ENCODE measurements at regions of chr5 and their contacts with region 1.

Region 1: DNA sequence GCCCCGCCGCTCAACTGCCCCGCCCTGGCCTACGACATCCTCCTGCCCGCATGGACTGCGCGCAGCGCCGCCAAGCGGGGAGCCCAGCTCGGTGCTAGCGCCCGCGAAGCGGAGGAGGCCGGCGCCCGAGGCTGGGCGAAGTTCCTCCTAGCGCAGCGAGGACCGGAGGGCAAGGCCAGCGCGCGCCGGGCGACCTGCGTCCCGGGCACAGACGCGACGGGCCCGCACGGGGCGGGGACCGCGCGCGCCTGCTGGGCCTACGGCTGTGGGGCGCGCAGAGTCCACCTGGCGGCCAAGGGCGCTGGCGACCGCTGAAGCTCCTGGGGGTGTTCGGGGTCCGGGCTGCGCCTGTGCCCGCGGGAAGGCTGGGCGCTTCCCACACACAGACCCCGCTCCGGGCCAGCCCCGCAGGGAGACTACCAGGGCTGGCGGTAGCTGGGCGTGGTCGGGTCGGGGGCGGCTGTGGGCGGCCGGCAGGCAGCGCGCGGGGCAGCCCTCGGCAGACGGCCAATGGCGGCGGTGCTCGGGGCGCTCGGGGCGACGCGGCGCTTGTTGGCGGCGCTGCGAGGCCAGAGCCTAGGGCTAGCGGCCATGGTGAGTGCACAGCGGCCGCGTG is at the start of gene PCBD2:
- DNase-seq: peak; percentile 96 to 97
- ATAC-seq: peak; percentile 97
- H3K4me3 ChIP-seq: peak within 1 kb of the TSS; percentile 85 to 87
- H3K27ac ChIP-seq: peak within 1 kb of the TSS; percentile 91 to 95
- H3K4me1 ChIP-seq: no peaks in the 10 kb centered on the region
- H3K27me3 ChIP-seq: no peaks in the 10 kb centered on the region
- total RNA-seq, gene PCBD2: 7.5 to 9.2 TPM

Region 2: GRCh38 chr5:134738133-134738962 is 166.4 kb before region 1 on chr5 and contains the start of gene CAMLG:
- intact Hi-C with region 1: loop called in 1 of 2 experiments (anchors 2 kb)
- DNase-seq: peak; percentile 99 to 100
- ATAC-seq: peak; percentile 100
- H3K4me3 ChIP-seq: peak within 1 kb of the TSS; percentile 68 to 72
- H3K27ac ChIP-seq: peak within 1 kb of the TSS; percentile 38 to 92
- H3K4me1 ChIP-seq: no peaks in the 10 kb centered on the region
- H3K27me3 ChIP-seq: no peaks in the 10 kb centered on the region
- total RNA-seq, gene CAMLG: 31.2 to 33.1 TPM

Region 3: DNA sequence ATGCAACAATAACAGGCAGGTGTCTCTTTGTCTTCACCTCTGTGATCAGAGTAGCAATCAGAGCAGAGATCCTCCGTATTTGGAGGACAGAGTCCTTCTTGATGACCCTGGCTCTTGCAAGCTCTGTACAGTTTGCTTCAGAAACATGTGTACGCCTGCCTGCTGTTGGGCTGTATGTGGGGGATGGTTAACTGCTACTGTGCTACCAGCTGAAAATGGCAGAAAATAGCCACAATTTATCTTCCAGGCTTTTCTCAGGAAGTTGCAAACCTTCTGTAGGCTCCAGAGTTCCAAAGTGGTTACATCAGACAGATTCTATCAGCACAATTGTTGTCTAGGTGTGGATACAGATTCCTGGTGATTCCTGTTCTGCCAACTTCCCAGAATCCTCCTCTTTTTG is 110.7 kb before region 1 on chr5:
- intact Hi-C with region 1: loop called in 1 of 2 experiments (anchors 10 kb)
- DNase-seq: no peak
- ATAC-seq: no peak
- H3K4me3 ChIP-seq: no peak overlapping the region
- H3K27ac ChIP-seq: no peak overlapping the region
- H3K4me1 ChIP-seq: no peaks in the 10 kb centered on the region
- H3K27me3 ChIP-seq: no peaks in the 10 kb centered on the region

Region 4: GRCh38 chr5:134845852-134846640 is 58.7 kb before region 1 on chr5 and contains the start of gene C5orf24:
- intact Hi-C with region 1: loop called in 1 of 2 experiments (anchors 5 kb)
- DNase-seq: peak; percentile 97 to 99
- ATAC-seq: peak; percentile 99
- H3K4me3 ChIP-seq: peak within 1 kb of the TSS; percentile 81 to 94
- H3K27ac ChIP-seq: peak within 1 kb of the TSS; percentile 76 to 88
- H3K4me1 ChIP-seq: peaks cover 2% of the 10 kb centered on the region in 2 donors
- H3K27me3 ChIP-seq: no peaks in the 10 kb centered on the region
- total RNA-seq, gene C5orf24: 59.0 to 71.4 TPM

Region 5: DNA sequence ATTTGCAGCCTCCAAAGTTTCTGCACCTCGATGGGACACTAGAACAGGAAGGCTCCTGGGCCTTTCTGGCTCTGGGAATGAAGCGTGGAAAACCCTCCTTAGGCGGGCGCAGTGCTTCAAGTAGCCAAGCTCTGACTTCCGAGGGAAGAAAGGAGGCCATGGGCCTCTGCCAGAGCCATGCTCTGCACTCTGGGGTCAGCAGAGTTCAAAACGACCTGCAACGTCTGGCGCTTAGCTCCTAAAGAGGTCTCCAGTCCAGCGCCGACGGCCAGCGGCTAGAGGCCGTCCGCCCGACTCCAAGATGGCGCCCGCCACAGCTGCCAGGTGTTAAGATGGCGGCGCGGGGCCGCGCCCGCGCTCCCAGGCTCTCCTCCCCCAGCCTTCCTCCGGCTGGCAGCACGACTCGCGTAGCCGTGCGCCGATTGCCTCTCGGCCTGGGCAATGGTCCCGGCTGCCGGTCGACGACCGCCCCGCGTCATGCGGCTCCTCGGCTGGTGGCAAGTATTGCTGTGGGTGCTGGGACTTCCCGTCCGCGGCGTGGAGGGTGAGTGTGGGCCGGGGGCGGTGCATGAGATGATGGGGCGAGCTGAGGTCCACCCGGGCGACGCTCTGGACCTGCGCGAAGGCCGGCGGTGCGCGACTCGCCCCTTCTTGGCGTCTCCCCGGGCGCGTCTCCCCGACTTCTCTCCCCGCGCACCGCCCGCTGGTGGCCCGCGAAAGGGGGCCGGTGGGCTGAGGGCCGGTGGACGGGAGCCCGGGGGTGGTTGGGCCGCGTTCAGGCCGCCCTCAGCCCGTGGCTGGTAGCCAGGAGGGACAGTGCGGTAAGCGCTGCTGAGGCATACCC is 30.5 kb before region 1 on chr5 and contains the start of gene TXNDC15:
- intact Hi-C with region 1: loop called in 1 of 2 experiments (anchors 2 kb)
- DNase-seq: peak; percentile 93 to 96
- ATAC-seq: peak; percentile 97
- H3K4me3 ChIP-seq: peak within 1 kb of the TSS; percentile 50 to 89
- H3K27ac ChIP-seq: peak within 1 kb of the TSS; percentile 51 to 72
- H3K4me1 ChIP-seq: no peaks in the 10 kb centered on the region
- H3K27me3 ChIP-seq: no peaks in the 10 kb centered on the region
- total RNA-seq, gene TXNDC15: 79.2 to 79.6 TPM